ENCODE measurements at regions of chr5 and their contacts with region 1.

Region 1: GRCh38 chr5:88680253-88681132 is 202.5 kb downstream of the MEF2C start:
- DNase-seq: peak; percentile 47 to 65
- H3K4me3 ChIP-seq: peak overlapping the region; percentile 14 to 29
- H3K27ac ChIP-seq: no peak overlapping the region
- H3K4me1 ChIP-seq: no peaks in the 10 kb centered on the region
- H3K27me3 ChIP-seq: peaks cover 42 to 87% of the 10 kb centered on the region in 2 donors
- CTCF ChIP-seq: peak; percentile 73 to 91 (median 84)
- POLR2A ChIP-seq: peak in 1 of 2 donors; percentile 13

Region 2: GRCh38 chr5:87588316-87588715 is 1092.2 kb before region 1 on chr5:
- intact Hi-C with region 1: no loop called
- DNase-seq: no peak
- H3K4me3 ChIP-seq: no peak overlapping the region
- H3K27ac ChIP-seq: no peak overlapping the region
- H3K4me1 ChIP-seq: no peaks in the 10 kb centered on the region
- H3K27me3 ChIP-seq: no peaks in the 10 kb centered on the region
- CTCF ChIP-seq: no peak
- POLR2A ChIP-seq: no peak

Region 3: DNA sequence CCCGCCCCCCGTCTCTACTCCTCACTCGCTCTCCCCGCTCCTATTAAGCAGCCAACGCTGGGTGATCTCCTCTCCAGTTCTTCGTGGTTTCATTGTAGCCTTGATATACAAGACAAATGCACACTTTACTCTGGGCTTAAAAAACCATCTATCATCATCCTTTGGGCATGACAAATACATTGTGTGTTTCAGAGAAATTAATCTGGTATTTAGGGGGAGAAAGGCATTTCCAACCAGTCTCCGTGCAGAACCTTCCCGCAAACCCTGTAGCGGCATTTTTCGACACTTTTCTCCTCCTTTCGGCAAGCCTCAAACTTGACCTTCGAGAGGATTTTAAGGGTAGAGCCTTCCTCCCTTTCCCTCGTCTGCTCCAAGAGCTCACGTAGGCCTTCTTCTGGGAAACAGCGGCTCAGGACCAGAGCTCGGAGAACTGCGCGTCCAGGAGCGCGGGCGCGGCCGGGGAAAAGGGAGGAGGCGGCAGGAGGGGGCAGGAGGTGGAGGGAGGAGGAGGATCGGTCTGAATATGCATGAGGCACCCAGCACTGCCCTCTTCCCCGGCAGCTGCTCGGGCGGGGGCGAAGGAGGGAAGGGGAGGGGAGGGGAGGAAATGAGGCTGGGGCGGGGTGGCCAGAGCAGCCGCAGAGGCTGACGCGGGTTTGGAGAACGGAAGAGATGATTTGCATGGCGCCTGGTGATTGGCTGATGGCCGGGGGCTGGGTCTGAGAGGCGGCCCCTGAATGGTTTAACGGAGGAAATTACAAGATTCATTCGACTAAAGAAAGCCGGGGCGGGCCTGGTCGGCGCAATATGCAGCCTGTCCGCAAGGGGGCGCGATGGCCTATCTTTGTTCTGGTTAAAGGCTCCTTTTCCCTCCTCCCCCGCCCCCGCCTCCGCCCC is 539.4 kb before region 1 on chr5:
- intact Hi-C with region 1: loop called (anchors 10 kb)
- DNase-seq: peak; percentile 99
- H3K4me3 ChIP-seq: peak overlapping the region; percentile 44 to 55
- H3K27ac ChIP-seq: peak overlapping the region; percentile 78 to 81
- H3K4me1 ChIP-seq: no peaks in the 10 kb centered on the region
- H3K27me3 ChIP-seq: no peaks in the 10 kb centered on the region
- CTCF ChIP-seq: peak; percentile 67 to 87 (median 76)
- POLR2A ChIP-seq: peak; percentile 53

Region 4: DNA sequence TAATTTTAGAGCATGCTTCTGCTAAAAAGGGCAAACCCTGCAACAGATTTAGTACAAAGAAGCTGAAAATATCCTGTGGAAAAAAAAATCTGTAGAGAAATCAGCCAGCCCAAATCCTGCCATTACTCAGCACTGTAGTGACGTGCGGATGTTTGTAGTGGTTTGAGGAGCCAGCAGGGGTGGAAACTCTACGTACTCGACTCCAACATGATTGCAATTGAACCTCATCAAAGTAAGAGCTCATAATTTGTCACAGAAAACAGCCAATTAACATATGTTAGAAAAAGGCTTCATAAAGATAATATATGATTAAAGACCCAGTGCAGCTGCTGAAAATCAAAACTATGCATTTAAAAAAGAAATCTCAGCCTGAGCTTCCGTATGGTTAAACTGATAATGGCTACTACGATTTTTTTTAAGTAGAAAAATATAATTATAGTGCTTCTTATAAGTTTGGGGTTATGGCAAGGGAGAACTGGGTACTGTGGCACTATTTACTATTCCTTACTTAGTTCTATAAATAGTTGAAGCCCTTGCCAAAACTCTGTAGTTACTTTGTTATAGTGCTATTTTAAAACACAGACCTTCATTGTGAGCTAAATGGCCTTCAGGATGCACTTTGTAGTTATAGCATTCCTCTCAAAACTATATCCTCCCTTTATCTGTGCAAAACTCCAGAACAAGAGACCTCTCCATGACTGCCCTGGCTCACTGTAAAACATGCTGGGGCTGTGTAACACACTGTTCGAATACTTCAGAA is 153.1 kb after region 1 on chr5:
- intact Hi-C with region 1: no loop called
- DNase-seq: peak; percentile 43 to 63
- H3K4me3 ChIP-seq: no peak overlapping the region
- H3K27ac ChIP-seq: peak overlapping the region; percentile 61 to 87
- H3K4me1 ChIP-seq: no peaks in the 10 kb centered on the region
- H3K27me3 ChIP-seq: no peaks in the 10 kb centered on the region
- CTCF ChIP-seq: no peak
- POLR2A ChIP-seq: no peak

Region 5: DNA sequence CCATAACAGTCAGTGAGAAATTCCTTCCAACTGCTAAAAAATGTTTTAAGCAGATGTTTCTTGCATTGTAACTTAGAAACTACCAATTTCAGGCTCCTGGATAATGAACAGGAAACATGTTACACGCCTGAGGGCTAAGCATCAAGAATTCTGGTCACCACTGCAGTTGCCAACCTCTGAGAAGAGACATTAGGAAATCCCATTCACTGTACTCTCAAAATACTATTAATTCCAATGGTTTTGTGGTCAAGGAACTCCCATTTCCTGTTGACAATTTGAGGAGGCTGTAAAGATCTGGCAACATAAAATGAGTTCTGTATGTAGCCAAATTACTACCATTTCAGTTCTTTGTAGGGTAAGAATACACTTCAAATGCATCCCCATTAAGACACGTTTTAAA is 658.4 kb after region 1 on chr5:
- intact Hi-C with region 1: no loop called
- DNase-seq: no peak
- H3K4me3 ChIP-seq: no peak overlapping the region
- H3K27ac ChIP-seq: no peak overlapping the region
- H3K4me1 ChIP-seq: no peaks in the 10 kb centered on the region
- H3K27me3 ChIP-seq: no peaks in the 10 kb centered on the region
- CTCF ChIP-seq: no peak
- POLR2A ChIP-seq: no peak

Measured in uterus (tissue), 4 donors.